A549 (cell line): ENCODE measurements at regions of chr9 and their contacts with region 1.

Region 1: GRCh38 chr9:33290247-33291030 is at the start of gene NFX1:
- DNase-seq: peak; percentile 95 to 99
- ATAC-seq: peak; percentile 86 to 94
- H3K4me3 ChIP-seq: peak within 1 kb of the TSS; percentile 66
- H3K27ac ChIP-seq: peak within 1 kb of the TSS; percentile 91 to 99
- H3K4me1 ChIP-seq: peaks cover 48% of the 10 kb centered on the region
- CTCF ChIP-seq: no peak
- EP300 ChIP-seq: no peak
- POLR2A ChIP-seq: peak; percentile 71
- RAD21 ChIP-seq: no peak
- polyA plus RNA-seq, gene NFX1: 41.1 and 41.2 TPM in 2 replicates

Region 2: DNA sequence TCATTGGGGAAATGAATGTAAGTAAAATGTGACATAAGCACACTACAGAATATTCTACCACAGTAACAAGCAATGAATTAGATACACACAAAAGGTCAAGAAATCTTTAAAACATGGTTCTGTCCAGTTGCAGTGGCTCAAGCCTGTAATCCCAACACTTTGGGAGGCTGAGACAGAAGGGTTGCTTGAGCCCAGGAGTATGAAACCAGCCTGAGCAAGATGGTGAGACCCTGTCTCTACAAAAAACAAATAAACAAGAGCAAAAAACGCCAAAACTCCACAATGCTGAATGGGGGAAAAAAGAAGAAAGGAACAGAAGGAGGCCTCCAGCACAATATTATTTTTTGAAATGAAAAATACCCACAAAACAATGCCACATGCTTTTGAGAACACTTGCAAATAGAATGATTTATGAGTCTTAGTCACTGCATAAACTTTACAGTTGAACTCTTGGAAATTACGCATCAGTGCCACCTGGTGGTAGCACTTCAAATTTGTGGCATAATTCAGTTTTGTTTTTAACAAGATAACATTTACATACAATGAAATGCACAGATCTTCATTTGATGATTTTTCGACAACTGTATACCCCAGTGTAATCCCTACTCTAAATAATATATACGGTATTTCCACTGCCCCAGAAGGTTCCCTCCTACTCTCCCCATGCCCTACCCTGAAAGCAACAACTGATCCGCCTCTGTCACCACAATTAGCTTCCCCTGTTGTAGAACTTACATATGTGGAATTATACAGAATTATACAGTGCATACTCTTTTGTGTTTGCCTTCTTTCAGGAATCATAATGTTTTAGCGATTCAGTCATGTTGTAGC is 64.9 kb before region 1 on chr9:
- CTCF ChIA-PET with region 1: interaction called, 12 read pairs
- POLR2A ChIA-PET with region 1: no interaction called
- DNase-seq: peak in 1 of 2 experiments; percentile 83
- ATAC-seq: 0 out of 6 replicates have a peak, but pooled peaks of 1 of the 2 experiments have one; percentile 8
- H3K4me3 ChIP-seq: no peak overlapping the region
- H3K27ac ChIP-seq: peak overlapping the region; percentile 46 to 67
- H3K4me1 ChIP-seq: peaks cover 54% of the 10 kb centered on the region
- CTCF ChIP-seq: peak; percentile 95
- EP300 ChIP-seq: no peak
- POLR2A ChIP-seq: no peak
- RAD21 ChIP-seq: peak; percentile 94 to 96

Region 3: GRCh38 chr9:33264473-33265177 is 25.8 kb before region 1 on chr9 and contains the starts of genes BAG1 and CHMP5:
- CTCF ChIA-PET with region 1: interaction called, 12 read pairs
- POLR2A ChIA-PET with region 1: interaction called, 4 read pairs
- DNase-seq: peak; percentile 99
- ATAC-seq: peak; percentile 93 to 95
- H3K4me3 ChIP-seq: peak within 1 kb of the TSS; percentile 90
- H3K27ac ChIP-seq: peak within 1 kb of the TSS; percentile 94 to 96
- H3K4me1 ChIP-seq: peaks cover 36% of the 10 kb centered on the region
- CTCF ChIP-seq: no peak
- EP300 ChIP-seq: no peak
- POLR2A ChIP-seq: peak; percentile 77
- RAD21 ChIP-seq: peak in 1 of 2 experiments; percentile 52; a peak in 3 of 5 replicates
- polyA plus RNA-seq, gene BAG1: 51.9 and 86.9 TPM in 2 replicates
- polyA plus RNA-seq, gene CHMP5: 108 and 187 TPM in 2 replicates

Region 4: GRCh38 chr9:33304362-33304761 is 13.9 kb after region 1 on chr9:
- CTCF ChIA-PET with region 1: interaction called, 21 read pairs
- POLR2A ChIA-PET with region 1: interaction called, 8 read pairs
- DNase-seq: no peak
- ATAC-seq: no peak
- H3K4me3 ChIP-seq: no peak overlapping the region
- H3K27ac ChIP-seq: no peak overlapping the region
- H3K4me1 ChIP-seq: 0 out of 3 replicates have a peak, but pooled peaks cover 2% of the 10 kb centered on the region
- CTCF ChIP-seq: no peak
- EP300 ChIP-seq: no peak
- POLR2A ChIP-seq: no peak
- RAD21 ChIP-seq: no peak

Region 5: DNA sequence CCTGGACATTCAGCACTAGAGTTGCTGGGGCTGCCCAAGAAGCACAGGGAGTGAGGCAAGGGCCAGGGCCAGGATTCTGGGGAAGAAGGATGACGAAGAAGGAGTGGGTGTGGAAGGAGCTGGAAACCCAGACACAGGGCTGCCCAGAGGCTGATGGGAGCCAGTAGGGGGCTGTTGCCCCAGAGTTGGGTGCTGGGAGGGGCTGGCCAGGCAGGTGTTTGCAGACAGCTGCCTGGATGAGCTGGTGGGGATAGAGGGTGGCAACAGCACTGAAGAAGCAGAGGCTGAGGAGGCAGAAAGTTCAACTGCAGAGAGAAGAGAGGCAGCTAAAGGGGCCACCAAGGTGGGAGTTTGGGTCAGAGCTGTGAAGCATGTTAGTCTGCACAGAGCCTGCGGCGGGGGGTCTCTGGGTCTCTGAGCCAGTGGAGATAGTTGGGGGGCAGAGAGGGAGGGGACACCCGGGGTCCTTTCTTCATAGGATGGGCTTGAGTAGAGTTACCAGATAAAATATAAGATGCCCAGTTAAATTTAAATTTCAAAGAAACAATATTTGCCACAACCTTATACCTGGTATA is 114.4 kb after region 1 on chr9:
- CTCF ChIA-PET with region 1: interaction called, 14 read pairs
- POLR2A ChIA-PET with region 1: interaction called, 4 read pairs
- DNase-seq: no peak
- ATAC-seq: peak; percentile 42 to 67; a peak in 3 of 6 replicates
- H3K4me3 ChIP-seq: no peak overlapping the region
- H3K27ac ChIP-seq: peak overlapping the region; percentile 27 to 49; a peak in 4 of 6 replicates
- H3K4me1 ChIP-seq: peaks cover 30% of the 10 kb centered on the region
- CTCF ChIP-seq: no peak
- EP300 ChIP-seq: no peak
- POLR2A ChIP-seq: no peak
- RAD21 ChIP-seq: no peak

Region 6: DNA sequence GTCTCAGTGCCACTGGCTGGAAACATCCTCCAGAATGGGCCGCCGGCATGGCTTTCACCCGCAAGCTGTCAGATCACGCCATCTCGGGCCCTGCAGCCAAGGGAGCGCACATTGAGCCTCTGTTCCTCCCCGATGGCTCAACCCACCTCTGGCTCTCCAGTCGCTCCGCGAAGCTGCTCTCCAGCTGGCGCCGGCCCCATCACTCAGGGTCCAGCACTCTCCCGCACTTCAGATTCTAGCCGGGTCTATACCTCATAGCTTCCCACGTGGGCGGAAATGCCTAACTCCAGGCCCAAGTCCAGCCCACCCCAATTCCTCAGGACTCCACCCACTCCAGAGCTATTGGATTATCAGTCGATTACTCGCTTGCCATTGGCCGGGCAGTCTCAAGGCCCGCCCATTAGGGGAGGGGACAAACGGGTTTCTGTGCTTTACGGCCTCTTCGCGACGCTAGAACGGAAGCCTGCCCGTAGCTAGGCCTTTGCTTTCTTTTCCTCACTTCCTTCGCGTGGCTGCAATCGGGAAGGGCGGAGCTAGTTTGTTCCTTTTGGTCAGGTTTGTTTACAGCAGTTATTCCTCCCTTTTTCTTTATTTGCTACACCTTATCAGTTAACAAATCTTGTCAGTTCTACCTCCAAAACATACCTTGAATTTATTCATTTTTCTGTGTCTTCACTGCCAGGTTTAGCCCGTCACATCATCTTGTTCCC is 183.4 kb after region 1 on chr9 and contains the start of gene NOL6:
- CTCF ChIA-PET with region 1: interaction called, 63 read pairs
- POLR2A ChIA-PET with region 1: interaction called, 12 read pairs
- DNase-seq: peak; percentile 97 to 99
- ATAC-seq: peak; percentile 99 to 100
- H3K4me3 ChIP-seq: peak within 1 kb of the TSS; percentile 88
- H3K27ac ChIP-seq: peak within 1 kb of the TSS; percentile 75 to 88
- H3K4me1 ChIP-seq: peaks cover 14% of the 10 kb centered on the region
- CTCF ChIP-seq: no peak
- EP300 ChIP-seq: no peak
- POLR2A ChIP-seq: peak; percentile 70
- RAD21 ChIP-seq: no peak
- polyA plus RNA-seq, gene NOL6: 49.5 and 56.6 TPM in 2 replicates